ENCODE measurements at regions of chr6 and their contacts with region 1.

Region 1: DNA sequence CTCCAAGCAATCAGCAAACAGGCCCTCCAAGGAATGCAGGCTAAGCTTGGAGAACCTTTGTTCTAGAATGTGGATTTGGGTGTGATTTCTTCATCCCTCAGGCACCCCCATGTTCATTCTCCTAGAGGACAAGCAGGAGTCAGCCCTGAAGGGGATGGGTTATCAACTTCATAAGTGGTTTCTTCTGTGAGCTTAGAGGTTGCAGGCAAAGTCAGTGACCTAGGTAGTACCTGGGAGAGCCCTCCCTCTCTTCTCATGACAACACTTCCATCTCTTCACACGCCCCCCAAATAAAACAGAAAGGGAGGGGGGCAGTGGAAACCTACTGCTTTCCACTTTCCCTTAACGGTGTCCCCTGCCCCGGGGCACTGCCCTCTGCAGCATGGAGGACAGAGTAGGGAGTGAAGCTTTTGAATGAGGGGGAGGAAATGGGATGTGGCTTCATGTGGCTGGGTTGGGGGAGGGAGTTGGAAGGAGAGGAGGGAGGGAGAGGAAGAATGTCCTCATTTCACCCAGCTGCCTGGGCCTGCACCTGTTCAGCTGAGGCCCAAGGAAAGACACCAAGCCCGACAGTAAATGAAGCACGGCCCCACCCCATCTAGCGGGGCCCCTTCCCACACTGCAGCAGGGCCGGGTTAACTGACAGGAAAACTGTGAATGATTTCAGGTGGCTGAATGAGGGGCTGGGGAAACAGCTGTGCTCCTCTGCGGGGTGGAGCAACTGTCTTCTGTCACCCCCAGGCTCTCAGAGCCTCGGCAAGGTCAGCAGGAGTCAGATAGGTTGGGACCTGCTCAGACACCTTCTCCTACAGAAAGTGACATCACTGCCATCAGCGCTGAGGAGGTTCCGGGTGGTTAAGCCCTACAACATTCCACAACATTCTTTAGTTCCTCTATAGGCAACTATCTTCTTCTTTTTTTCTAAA is 40.1 kb upstream of the TAF8 start:
- DNase-seq: no peak
- H3K4me3 ChIP-seq: no peak overlapping the region
- H3K4me3 Mint-ChIP-seq: peak overlapping the region; percentile 48 to 84 (median 70)
- H3K27ac ChIP-seq: peak overlapping the region; percentile 51
- H3K27ac Mint-ChIP-seq: peak overlapping the region; percentile 73 to 93 (median 87)
- H3K4me1 ChIP-seq: peaks cover 64% of the 10 kb centered on the region
- H3K4me1 Mint-ChIP-seq: peaks cover 57 to 85% (median 69%) of the 10 kb centered on the region in 4 donors
- H3K27me3 ChIP-seq: no peaks in the 10 kb centered on the region
- H3K27me3 Mint-ChIP-seq: no peaks in the 10 kb centered on the region

Region 2: GRCh38 chr6:42021847-42022754 is 11.9 kb after region 1 on chr6:
- CTCF ChIA-PET with region 1: interaction called, 4 read pairs
- POLR2A ChIA-PET with region 1: interaction called, 14 read pairs
- intact Hi-C with region 1: loop called (anchors 2 kb)
- DNase-seq: peak; percentile 73 to 93 (median 81)
- H3K4me3 ChIP-seq: peak overlapping the region in 1 of 2 donors; percentile 47
- H3K4me3 Mint-ChIP-seq: peak overlapping the region; percentile 75 to 92 (median 85)
- H3K27ac ChIP-seq: peak overlapping the region; percentile 65
- H3K27ac Mint-ChIP-seq: peak overlapping the region; percentile 91 to 98 (median 95)
- H3K4me1 ChIP-seq: peaks cover 83% of the 10 kb centered on the region
- H3K4me1 Mint-ChIP-seq: peaks cover 60 to 80% (median 66%) of the 10 kb centered on the region in 4 donors
- H3K27me3 ChIP-seq: no peaks in the 10 kb centered on the region
- H3K27me3 Mint-ChIP-seq: no peaks in the 10 kb centered on the region

Region 3: DNA sequence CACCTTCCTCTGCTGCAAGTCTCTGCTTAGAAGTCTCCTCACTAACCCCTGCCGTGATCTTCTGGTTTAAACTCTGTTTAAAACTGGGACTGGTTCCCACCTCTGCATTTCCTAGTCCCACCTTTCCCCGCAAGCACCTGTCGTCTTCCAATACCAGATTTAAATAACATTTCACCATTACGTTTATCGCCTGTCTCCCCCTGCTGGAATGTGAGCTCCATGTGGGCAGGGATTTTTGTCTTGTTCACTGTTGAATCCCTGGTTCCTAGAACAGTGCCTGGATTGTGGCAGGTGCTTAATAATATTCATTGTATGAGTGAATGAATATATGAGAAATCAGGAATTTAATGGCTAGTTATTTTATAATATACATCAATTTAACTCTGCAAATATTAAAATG is 165.6 kb after region 1 on chr6:
- CTCF ChIA-PET with region 1: no interaction called
- POLR2A ChIA-PET with region 1: no interaction called
- intact Hi-C with region 1: no loop called
- DNase-seq: no peak
- H3K4me3 ChIP-seq: no peak overlapping the region
- H3K4me3 Mint-ChIP-seq: no peak overlapping the region
- H3K27ac ChIP-seq: no peak overlapping the region
- H3K27ac Mint-ChIP-seq: no peak overlapping the region
- H3K4me1 ChIP-seq: no peaks in the 10 kb centered on the region
- H3K4me1 Mint-ChIP-seq: peaks cover 0 to 6% (median 0%) of the 10 kb centered on the region in 4 donors
- H3K27me3 ChIP-seq: no peaks in the 10 kb centered on the region
- H3K27me3 Mint-ChIP-seq: peaks cover 0 to 5% of the 10 kb centered on the region in 2 donors

Region 4: DNA sequence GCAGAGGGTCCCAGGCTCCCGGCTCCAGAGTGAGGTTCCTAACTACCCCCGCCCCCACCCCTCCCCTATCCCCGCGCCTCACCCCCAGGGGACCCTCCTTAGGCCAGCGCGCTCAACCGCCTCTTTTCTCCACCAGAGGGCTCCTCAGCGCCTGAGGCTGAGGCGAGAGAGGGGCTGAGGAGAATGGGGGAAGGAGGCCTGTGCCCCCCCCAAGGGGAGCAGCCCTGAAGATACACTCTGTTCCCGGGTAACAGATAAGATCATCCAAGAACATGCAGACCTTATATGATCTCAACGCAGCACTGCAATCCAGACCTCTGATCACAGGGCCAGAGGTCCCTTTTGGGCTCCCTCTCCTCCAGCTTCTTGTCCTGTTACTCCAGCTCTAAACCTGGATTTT is 250.7 kb after region 1 on chr6:
- CTCF ChIA-PET with region 1: no interaction called
- POLR2A ChIA-PET with region 1: no interaction called
- intact Hi-C with region 1: no loop called
- DNase-seq: peak in 3 of 5 donors; percentile 11 to 25 (median 15)
- H3K4me3 ChIP-seq: no peak overlapping the region
- H3K4me3 Mint-ChIP-seq: peak overlapping the region in 1 of 8 donors; percentile 29
- H3K27ac ChIP-seq: no peak overlapping the region
- H3K27ac Mint-ChIP-seq: peak overlapping the region in 1 of 7 donors; percentile 82
- H3K4me1 ChIP-seq: no peaks in the 10 kb centered on the region
- H3K4me1 Mint-ChIP-seq: peaks cover 0 to 8% (median 6%) of the 10 kb centered on the region in 4 donors
- H3K27me3 ChIP-seq: no peaks in the 10 kb centered on the region
- H3K27me3 Mint-ChIP-seq: no peaks in the 10 kb centered on the region